Activated CD8-positive, alpha-beta T cell treated with anti-CD3 and anti-CD28 coated beads for 36 hours (primary cell): ENCODE measurements at regions of chr19 and their contacts with region 1.

Region 1: DNA sequence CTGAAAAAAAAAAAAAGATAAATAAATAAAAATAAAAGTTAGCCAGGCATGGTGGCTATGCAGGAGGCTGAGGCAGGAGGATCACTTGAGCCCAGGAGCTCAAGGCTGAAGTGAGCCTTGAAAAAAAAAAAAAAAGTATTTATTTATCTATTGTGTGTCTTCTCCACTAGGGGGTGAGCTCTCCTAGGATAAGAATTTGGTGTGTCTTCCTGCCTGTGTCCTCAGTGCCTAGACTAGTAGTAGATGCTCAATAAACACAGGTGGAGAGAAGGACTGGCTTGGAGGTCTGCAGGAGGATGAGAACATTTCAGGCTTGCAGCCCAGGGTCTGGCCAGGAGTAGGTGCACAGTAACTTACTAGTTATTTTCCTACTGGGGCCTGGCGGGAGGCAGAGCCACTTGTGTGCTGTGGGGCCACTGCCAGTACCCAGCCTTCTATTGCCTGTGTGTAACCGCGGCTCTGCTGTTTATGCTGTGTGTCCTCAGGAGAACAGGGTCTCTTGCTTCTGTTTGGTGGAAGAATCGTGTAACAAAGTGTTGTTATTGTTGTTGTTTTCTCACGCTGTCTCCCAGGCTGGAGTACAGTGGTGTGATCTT is 5.4 kb downstream of the LMTK3 start:
- DNase-seq: peak; percentile 20
- ATAC-seq: no peak
- H3K4me3 Mint-ChIP-seq: no peak overlapping the region
- H3K27ac Mint-ChIP-seq: no peak overlapping the region
- H3K4me1 Mint-ChIP-seq: peaks cover 17% of the 10 kb centered on the region
- H3K27me3 Mint-ChIP-seq: no peaks in the 10 kb centered on the region
- CTCF ChIP-seq: peak; percentile 79

Region 2: DNA sequence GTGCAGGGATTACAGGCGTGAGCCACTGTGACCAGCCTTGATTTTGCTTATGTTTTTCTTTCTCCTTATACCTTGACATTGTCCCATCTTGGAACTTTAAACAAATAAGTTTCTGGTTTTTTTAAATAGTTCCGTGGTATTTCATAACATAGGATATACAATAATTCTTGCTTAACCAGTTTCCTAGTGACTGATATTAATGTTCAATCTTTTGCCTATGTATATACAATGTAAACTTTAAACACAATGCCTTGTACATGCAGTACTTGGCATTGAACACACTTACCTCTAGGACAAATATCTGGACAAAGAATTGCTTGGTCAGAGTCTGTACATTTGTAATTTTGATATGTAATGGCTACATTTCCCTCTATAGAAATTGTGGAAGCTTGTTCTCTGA is 75.9 kb after region 1 on chr19:
- CTCF ChIA-PET with region 1: interaction called, 61 read pairs
- POLR2A ChIA-PET with region 1: interaction called, 8 read pairs
- intact Hi-C with region 1: loop called (anchors 2 kb)
- DNase-seq: no peak
- ATAC-seq: no peak
- H3K4me3 Mint-ChIP-seq: no peak overlapping the region
- H3K27ac Mint-ChIP-seq: no peak overlapping the region
- H3K4me1 Mint-ChIP-seq: peaks cover 5% of the 10 kb centered on the region
- H3K27me3 Mint-ChIP-seq: no peaks in the 10 kb centered on the region
- CTCF ChIP-seq: no peak

Region 3: GRCh38 chr19:48588670-48589399 is 82.6 kb after region 1 on chr19:
- CTCF ChIA-PET with region 1: interaction called, 61 read pairs
- POLR2A ChIA-PET with region 1: interaction called, 8 read pairs
- intact Hi-C with region 1: loop called (anchors 2 kb)
- DNase-seq: peak; percentile 94
- ATAC-seq: peak; percentile 87
- H3K4me3 Mint-ChIP-seq: peak overlapping the region; percentile 38
- H3K27ac Mint-ChIP-seq: peak overlapping the region; percentile 36
- H3K4me1 Mint-ChIP-seq: peaks cover 15% of the 10 kb centered on the region
- H3K27me3 Mint-ChIP-seq: no peaks in the 10 kb centered on the region
- CTCF ChIP-seq: peak; percentile 88